ENCODE measurements at regions of chr7 and their contacts with region 1.

Region 1: DNA sequence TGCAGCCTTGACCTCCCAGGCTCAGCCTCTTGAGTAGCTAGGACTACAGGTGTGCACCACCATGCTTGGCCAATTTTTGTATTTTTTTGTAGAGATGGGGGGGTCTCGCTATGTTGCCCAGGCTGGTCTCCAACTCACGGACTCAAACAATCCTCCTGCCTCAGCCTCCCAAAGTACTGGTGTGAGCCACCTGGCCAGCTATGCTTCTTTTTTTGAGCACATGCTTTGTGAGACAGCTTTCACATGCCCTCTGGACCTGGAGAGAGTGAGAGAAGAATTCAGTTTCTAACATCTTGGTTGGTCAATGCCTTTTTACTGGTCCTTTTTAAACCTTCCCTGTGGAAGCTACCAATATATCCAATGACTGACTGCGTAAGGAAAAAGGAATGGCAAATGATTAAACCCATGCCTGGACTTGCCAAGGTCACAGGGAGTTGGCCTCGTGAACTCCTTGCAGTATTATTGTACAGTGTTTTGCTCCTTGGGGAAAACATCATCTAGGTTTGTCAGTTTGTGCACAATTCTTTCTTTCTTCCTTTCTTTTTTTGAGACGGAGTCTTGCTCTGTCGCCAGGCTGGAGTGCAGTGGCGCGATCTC is 6.2 kb upstream of the FOXK1 start:
- DNase-seq: no peak
- H3K4me3 ChIP-seq: no peak overlapping the region
- H3K27ac ChIP-seq: no peak overlapping the region
- H3K4me1 ChIP-seq: no peaks in the 10 kb centered on the region
- H3K27me3 ChIP-seq: no peaks in the 10 kb centered on the region
- CTCF ChIP-seq: no peak
- EP300 ChIP-seq: no peak
- POLR2A ChIP-seq: no peak

Region 2: GRCh38 chr7:3807824-3808223 is 868.0 kb before region 1 on chr7:
- intact Hi-C with region 1: no loop called
- DNase-seq: no peak
- H3K4me3 ChIP-seq: no peak overlapping the region
- H3K27ac ChIP-seq: no peak overlapping the region
- H3K4me1 ChIP-seq: no peaks in the 10 kb centered on the region
- H3K27me3 ChIP-seq: no peaks in the 10 kb centered on the region
- CTCF ChIP-seq: no peak
- EP300 ChIP-seq: no peak
- POLR2A ChIP-seq: no peak

Region 3: GRCh38 chr7:4531236-4531635 is 144.6 kb before region 1 on chr7:
- intact Hi-C with region 1: no loop called
- DNase-seq: no peak
- H3K4me3 ChIP-seq: no peak overlapping the region
- H3K27ac ChIP-seq: no peak overlapping the region
- H3K4me1 ChIP-seq: no peaks in the 10 kb centered on the region
- H3K27me3 ChIP-seq: peaks cover 0 to 16% (median 0%) of the 10 kb centered on the region in 3 donors
- CTCF ChIP-seq: no peak
- EP300 ChIP-seq: no peak
- POLR2A ChIP-seq: no peak

Region 4: DNA sequence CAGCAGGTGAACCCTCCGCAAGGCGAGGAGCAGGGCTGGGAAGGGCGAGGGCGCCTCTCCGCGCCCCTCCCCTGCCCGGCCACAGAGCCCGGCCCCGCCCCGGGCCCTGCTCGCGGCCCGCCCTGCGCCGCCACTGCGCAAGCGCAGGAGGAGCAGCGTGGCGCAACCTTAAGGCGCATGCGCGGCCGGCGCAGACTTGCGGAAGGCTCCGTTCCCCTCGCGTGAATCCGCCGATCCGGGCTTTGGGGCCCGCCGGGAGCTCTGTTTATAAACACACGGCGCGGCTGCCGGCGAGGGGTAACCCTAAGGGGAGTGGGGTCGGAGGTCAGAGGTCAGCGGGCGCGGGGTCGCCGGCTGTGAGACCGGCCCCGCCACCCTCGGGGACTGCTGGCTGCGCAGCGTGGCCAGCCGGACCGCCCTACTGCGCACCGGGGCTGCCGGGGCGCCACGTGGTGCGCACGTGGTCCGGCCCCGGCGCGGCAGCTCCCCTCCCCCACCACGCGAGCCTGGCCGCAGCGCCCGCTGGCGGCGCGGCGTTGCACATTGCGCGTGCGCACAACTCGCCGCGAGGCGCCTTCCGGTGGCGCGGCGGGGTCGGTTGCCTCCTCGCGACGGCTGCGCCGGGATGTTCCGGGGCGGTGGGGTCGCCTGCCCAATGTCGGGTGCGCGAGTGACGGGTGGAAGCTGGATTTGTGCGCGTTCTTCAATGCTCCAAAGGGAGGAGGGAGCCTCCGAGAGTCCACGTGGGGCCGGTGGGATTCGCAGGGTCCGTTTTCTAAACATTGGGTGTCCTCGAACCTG is 34.0 kb before region 1 on chr7:
- intact Hi-C with region 1: loop called (anchors 5 kb)
- DNase-seq: peak; percentile 97 to 99
- H3K4me3 ChIP-seq: peak overlapping the region; percentile 46 to 64 (median 62)
- H3K27ac ChIP-seq: peak overlapping the region; percentile 83 to 93 (median 92)
- H3K4me1 ChIP-seq: peaks cover 6 to 16% (median 14%) of the 10 kb centered on the region in 4 donors
- H3K27me3 ChIP-seq: no peaks in the 10 kb centered on the region
- CTCF ChIP-seq: peak in 3 of 7 experiments; percentile 31 to 49 (median 37)
- EP300 ChIP-seq: peak; percentile 16
- POLR2A ChIP-seq: no peak

Region 5: GRCh38 chr7:4906682-4907081 is 230.8 kb after region 1 on chr7:
- intact Hi-C with region 1: no loop called
- DNase-seq: no peak
- H3K4me3 ChIP-seq: no peak overlapping the region
- H3K27ac ChIP-seq: no peak overlapping the region
- H3K4me1 ChIP-seq: no peaks in the 10 kb centered on the region
- H3K27me3 ChIP-seq: peaks cover 0 to 56% (median 8%) of the 10 kb centered on the region in 3 donors
- CTCF ChIP-seq: no peak
- EP300 ChIP-seq: no peak
- POLR2A ChIP-seq: no peak